Mammary epithelial cell (primary cell): ENCODE measurements at regions of chr11 and their contacts with region 1.

Region 1: DNA sequence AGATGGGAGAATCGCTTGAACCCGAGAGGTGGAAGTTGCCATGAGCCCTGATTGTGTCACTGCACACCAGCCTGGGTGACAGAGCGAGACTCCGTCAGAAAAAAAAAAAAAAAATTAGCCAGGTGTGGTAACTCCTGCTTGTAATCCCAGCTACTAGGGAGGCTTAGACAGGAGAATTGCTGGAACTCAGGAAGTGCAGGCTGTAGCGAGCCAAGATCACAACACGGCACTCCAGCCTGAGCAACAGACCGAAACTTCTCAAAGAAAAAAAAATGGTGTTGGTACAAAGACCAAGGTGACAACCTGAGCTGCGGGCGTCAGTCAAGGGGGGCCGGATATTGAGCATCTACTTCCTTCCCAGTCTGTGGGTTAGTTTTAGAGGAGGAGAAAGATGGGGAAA is 48.4 kb upstream of the HSPA8 start:
- DNase-seq: no peak
- H3K4me3 ChIP-seq: no peak overlapping the region
- H3K27ac ChIP-seq: no peak overlapping the region
- H3K4me1 ChIP-seq: peaks cover 7% of the 10 kb centered on the region
- H3K27me3 ChIP-seq: no peaks in the 10 kb centered on the region
- CTCF ChIP-seq: no peak

Region 2: GRCh38 chr11:122998727-122999366 is 111.5 kb before region 1 on chr11:
- CTCF ChIA-PET with region 1: no interaction called
- dilution Hi-C with region 1: no loop called
- in situ Hi-C with region 1: no loop called
- intact Hi-C with region 1: no loop called
- DNase-seq: no peak
- H3K4me3 ChIP-seq: no peak overlapping the region
- H3K27ac ChIP-seq: no peak overlapping the region
- H3K4me1 ChIP-seq: no peaks in the 10 kb centered on the region
- H3K27me3 ChIP-seq: no peaks in the 10 kb centered on the region
- CTCF ChIP-seq: no peak

Region 3: DNA sequence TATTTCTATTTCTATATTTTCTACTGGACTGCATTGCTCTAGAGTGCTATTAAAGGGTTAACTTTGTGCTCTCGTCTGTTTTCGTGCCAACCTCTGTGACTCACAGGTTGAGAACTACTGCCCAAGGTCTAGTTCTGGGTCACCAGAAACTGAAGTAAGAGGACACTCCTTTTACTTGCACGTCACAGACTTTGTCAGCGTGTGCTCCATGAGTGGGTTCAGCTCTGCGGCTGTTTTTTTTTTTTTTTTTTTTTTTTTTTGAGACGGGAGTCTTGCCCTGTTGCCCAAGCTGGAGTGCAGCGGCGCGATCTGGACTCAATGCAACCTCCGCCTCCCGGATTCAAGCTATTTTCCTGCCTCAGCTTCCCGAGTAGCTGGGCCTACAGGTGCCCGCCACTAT is 34.9 kb after region 1 on chr11:
- CTCF ChIA-PET with region 1: no interaction called
- dilution Hi-C with region 1: no loop called
- in situ Hi-C with region 1: no loop called
- intact Hi-C with region 1: loop called (anchors 1 kb)
- DNase-seq: peak; percentile 93
- H3K4me3 ChIP-seq: no peak overlapping the region
- H3K27ac ChIP-seq: peak overlapping the region; percentile 70
- H3K4me1 ChIP-seq: peaks cover 12% of the 10 kb centered on the region
- H3K27me3 ChIP-seq: no peaks in the 10 kb centered on the region
- CTCF ChIP-seq: no peak

Region 4: DNA sequence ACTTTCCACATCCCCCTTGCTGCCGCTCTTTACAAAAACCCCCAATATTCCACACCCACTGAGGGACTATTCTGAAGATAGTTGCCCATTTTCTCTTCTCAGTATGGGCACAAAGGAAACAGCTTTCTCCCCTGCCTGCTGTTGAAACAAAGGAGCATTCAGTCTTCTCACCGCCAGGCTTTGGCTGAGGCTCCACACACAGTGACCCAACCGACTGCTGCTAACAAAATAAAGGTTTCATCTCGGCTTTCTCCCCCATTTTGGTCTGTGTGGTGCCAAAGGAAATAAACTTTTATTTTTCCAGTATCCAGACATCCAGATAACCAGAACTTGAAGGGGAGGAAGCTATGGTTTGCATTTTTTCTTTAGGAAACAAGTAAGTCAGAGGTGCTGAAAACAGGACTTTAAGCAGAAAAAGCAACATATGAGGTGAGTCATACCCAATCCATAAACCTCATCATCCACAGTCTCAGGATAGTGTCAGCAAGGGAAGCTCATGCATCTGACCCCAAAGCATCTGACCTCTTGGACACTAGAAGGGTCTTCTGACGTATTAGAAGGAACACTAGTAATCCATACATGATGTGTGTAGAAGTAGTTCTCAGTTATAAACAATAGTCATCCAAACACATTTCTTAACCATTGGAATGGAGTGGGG is 78.3 kb after region 1 on chr11:
- CTCF ChIA-PET with region 1: interaction called, 5 read pairs
- dilution Hi-C with region 1: no loop called
- in situ Hi-C with region 1: no loop called
- intact Hi-C with region 1: loop called (anchors 5 kb)
- DNase-seq: peak; percentile 68
- H3K4me3 ChIP-seq: peak overlapping the region; percentile 2 to 24 (median 5)
- H3K27ac ChIP-seq: peak overlapping the region; percentile 57
- H3K4me1 ChIP-seq: peaks cover 74% of the 10 kb centered on the region
- H3K27me3 ChIP-seq: no peaks in the 10 kb centered on the region
- CTCF ChIP-seq: no peak

Region 5: GRCh38 chr11:123246749-123247495 is 136.6 kb after region 1 on chr11:
- CTCF ChIA-PET with region 1: interaction called, 17 read pairs
- dilution Hi-C with region 1: no loop called
- in situ Hi-C with region 1: loop called in 1 of 2 experiments (anchors 5 kb)
- intact Hi-C with region 1: loop called (anchors 1 kb)
- DNase-seq: peak; percentile 59
- H3K4me3 ChIP-seq: no peak overlapping the region
- H3K27ac ChIP-seq: no peak overlapping the region
- H3K4me1 ChIP-seq: peaks cover 3% of the 10 kb centered on the region
- H3K27me3 ChIP-seq: no peaks in the 10 kb centered on the region
- CTCF ChIP-seq: peak; percentile 92 to 99

Region 6: GRCh38 chr11:123478352-123478987 is 368.1 kb after region 1 on chr11:
- CTCF ChIA-PET with region 1: no interaction called
- dilution Hi-C with region 1: no loop called
- in situ Hi-C with region 1: loop called in 1 of 2 experiments (anchors 25 kb)
- intact Hi-C with region 1: loop called (anchors 2 kb)
- DNase-seq: peak; percentile 37
- H3K4me3 ChIP-seq: no peak overlapping the region
- H3K27ac ChIP-seq: no peak overlapping the region
- H3K4me1 ChIP-seq: peaks cover 4% of the 10 kb centered on the region
- H3K27me3 ChIP-seq: peaks cover 5% of the 10 kb centered on the region
- CTCF ChIP-seq: peak; percentile 59 to 71